ENCODE measurements at regions of chr2 and their contacts with region 1.

Region 1: GRCh38 chr2:183078465-183079138 is at the start of gene DUSP19:
- DNase-seq: peak; percentile 85
- H3K4me3 Mint-ChIP-seq: peak within 1 kb of the TSS; percentile 77
- H3K27ac Mint-ChIP-seq: peak within 1 kb of the TSS; percentile 16
- H3K4me1 Mint-ChIP-seq: peaks cover 13% of the 10 kb centered on the region
- H3K27me3 Mint-ChIP-seq: no peaks in the 10 kb centered on the region
- total RNA-seq, gene DUSP19: 0.93 to 1.1 TPM

Region 2: GRCh38 chr2:183124222-183124956 is 45.8 kb after region 1 on chr2 and contains the start of gene NUP35:
- CTCF ChIA-PET with region 1: no interaction called
- POLR2A ChIA-PET with region 1: interaction called, 12 read pairs
- DNase-seq: peak; percentile 85
- H3K4me3 Mint-ChIP-seq: peak within 1 kb of the TSS; percentile 80
- H3K27ac Mint-ChIP-seq: peak within 1 kb of the TSS; percentile 96
- H3K4me1 Mint-ChIP-seq: peaks cover 33% of the 10 kb centered on the region
- H3K27me3 Mint-ChIP-seq: peaks cover 2% of the 10 kb centered on the region
- total RNA-seq, gene NUP35: 15.5 to 15.9 TPM

Region 3: DNA sequence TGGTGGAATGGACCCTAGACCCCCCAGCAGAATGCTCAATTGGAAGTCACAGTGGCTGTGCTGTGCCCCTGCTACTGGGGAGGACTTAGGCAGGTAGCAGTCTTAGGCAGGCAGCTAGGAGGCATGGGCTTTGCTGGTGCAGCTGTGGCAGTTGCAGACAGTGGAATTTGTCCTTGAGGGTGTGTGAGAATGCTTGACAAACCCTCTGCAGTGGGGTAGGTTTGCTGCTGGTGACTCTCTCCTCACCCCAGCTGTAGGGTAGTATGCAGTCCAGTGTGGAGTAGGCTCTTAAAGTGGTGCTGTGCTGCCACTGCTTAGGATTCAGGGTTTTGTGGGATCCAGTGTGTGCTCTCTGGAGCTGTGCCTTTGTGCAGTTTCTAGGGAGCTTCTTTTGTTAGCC is 106.9 kb after region 1 on chr2:
- CTCF ChIA-PET with region 1: no interaction called
- POLR2A ChIA-PET with region 1: no interaction called
- DNase-seq: no peak
- H3K4me3 Mint-ChIP-seq: no peak overlapping the region
- H3K27ac Mint-ChIP-seq: no peak overlapping the region
- H3K4me1 Mint-ChIP-seq: no peaks in the 10 kb centered on the region
- H3K27me3 Mint-ChIP-seq: no peaks in the 10 kb centered on the region